H1 (cell line): ENCODE measurements at regions of chr2 and their contacts with region 1.

Region 1: GRCh38 chr2:157302492-157303099 is 23.0 kb downstream of the ERMN start:
- DNase-seq: no peak
- H3K4me3 ChIP-seq: no peak overlapping the region
- H3K27ac ChIP-seq: no peak overlapping the region
- H3K4me1 ChIP-seq: peaks cover 0 to 2% (median 0%) of the 10 kb centered on the region in 4 experiments; a peak in 1 of 7 replicates
- H3K27me3 ChIP-seq: no peaks in the 10 kb centered on the region
- CTCF ChIP-seq: peak in 2 of 3 experiments; percentile 53 to 72; a peak in 3 of 4 replicates
- EP300 ChIP-seq: no peak
- POLR2A ChIP-seq: no peak
- RAD21 ChIP-seq: peak; percentile 86 to 90

Region 2: DNA sequence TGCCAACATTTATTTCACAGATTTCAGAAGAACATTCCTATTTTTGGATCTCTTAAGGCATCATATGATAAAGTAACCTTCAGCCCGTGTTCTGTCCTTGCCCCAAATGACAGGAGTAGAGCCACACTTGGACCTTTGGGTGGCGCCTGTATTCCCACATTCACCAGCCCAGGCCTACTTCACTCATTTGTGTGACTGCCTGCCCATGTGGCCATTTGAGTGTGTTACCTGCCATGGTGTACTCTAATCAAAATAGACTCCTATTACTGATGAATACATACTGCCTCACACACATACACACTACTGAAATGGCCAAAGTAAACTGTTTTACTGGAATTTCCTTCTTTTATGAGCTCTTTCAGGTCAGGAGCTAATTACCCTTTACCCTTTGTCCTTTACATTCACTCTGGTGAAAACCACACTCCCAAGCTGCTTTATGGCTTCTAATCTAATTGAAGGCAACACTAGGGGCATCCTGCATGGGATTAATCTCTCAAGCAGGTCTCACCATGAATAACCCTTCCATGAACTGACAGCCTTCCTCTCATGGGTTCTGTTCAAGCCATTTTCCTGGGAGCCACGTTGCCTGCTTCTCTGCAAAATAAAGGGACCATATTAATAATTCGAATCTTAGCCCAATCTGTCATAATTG is 316.1 kb before region 1 on chr2:
- CTCF ChIA-PET with region 1: no interaction called
- POLR2A ChIA-PET with region 1: no interaction called
- DNase-seq: no peak
- H3K4me3 ChIP-seq: no peak overlapping the region
- H3K27ac ChIP-seq: no peak overlapping the region
- H3K4me1 ChIP-seq: no peaks in the 10 kb centered on the region; a peak in 1 of 7 replicates
- H3K27me3 ChIP-seq: no peaks in the 10 kb centered on the region
- CTCF ChIP-seq: peak; percentile 18 to 65 (median 48)
- EP300 ChIP-seq: no peak
- POLR2A ChIP-seq: no peak
- RAD21 ChIP-seq: peak; percentile 54 to 60; a peak in 3 of 4 replicates

Region 3: GRCh38 chr2:157221394-157221988 is 81.1 kb before region 1 on chr2:
- CTCF ChIA-PET with region 1: no interaction called
- POLR2A ChIA-PET with region 1: no interaction called
- DNase-seq: no peak
- H3K4me3 ChIP-seq: no peak overlapping the region
- H3K27ac ChIP-seq: no peak overlapping the region
- H3K4me1 ChIP-seq: no peaks in the 10 kb centered on the region
- H3K27me3 ChIP-seq: no peaks in the 10 kb centered on the region
- CTCF ChIP-seq: no peak
- EP300 ChIP-seq: no peak
- POLR2A ChIP-seq: no peak
- RAD21 ChIP-seq: no peak

Region 4: DNA sequence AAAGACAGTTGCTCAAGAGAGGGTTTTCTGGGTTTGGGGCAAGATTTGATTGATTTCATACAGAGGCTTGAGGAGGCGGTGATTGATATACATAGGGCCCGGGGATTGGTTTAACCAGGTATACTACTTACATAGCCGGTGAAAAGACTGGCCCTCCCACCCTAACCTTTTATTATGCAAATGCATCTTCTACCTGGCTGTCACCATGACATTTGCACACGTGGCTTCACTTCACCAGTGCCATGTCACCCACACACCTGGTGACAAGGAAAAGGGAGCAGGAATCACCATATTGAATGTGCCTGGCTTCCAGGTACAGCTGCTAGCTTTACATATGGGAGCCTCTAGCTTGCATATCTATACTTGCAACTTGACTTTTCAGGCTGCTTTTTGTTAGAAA is 13.3 kb after region 1 on chr2:
- CTCF ChIA-PET with region 1: interaction called, 24 read pairs
- POLR2A ChIA-PET with region 1: no interaction called
- DNase-seq: no peak
- H3K4me3 ChIP-seq: no peak overlapping the region
- H3K27ac ChIP-seq: no peak overlapping the region
- H3K4me1 ChIP-seq: peaks cover 0 to 3% (median 1%) of the 10 kb centered on the region in 4 experiments; a peak in 2 of 7 replicates
- H3K27me3 ChIP-seq: no peaks in the 10 kb centered on the region
- CTCF ChIP-seq: no peak
- EP300 ChIP-seq: no peak
- POLR2A ChIP-seq: no peak
- RAD21 ChIP-seq: no peak

Region 5: GRCh38 chr2:157327621-157328500 is 25.3 kb after region 1 on chr2:
- CTCF ChIA-PET with region 1: interaction called, 299 read pairs
- POLR2A ChIA-PET with region 1: no interaction called
- DNase-seq: peak; percentile 80 to 92
- H3K4me3 ChIP-seq: no peak overlapping the region
- H3K27ac ChIP-seq: no peak overlapping the region
- H3K4me1 ChIP-seq: peaks cover 0 to 9% (median 8%) of the 10 kb centered on the region in 4 experiments; a peak in 5 of 7 replicates
- H3K27me3 ChIP-seq: no peaks in the 10 kb centered on the region
- CTCF ChIP-seq: peak; percentile 93 to 97 (median 94)
- EP300 ChIP-seq: no peak
- POLR2A ChIP-seq: no peak
- RAD21 ChIP-seq: peak; percentile 81 to 87

Region 6: GRCh38 chr2:157427003-157427921 is 124.7 kb after region 1 on chr2:
- CTCF ChIA-PET with region 1: no interaction called
- POLR2A ChIA-PET with region 1: no interaction called
- DNase-seq: no peak
- H3K4me3 ChIP-seq: no peak overlapping the region
- H3K27ac ChIP-seq: no peak overlapping the region
- H3K4me1 ChIP-seq: no peaks in the 10 kb centered on the region
- H3K27me3 ChIP-seq: no peaks in the 10 kb centered on the region
- CTCF ChIP-seq: no peak
- EP300 ChIP-seq: no peak
- POLR2A ChIP-seq: no peak
- RAD21 ChIP-seq: no peak

Region 7: DNA sequence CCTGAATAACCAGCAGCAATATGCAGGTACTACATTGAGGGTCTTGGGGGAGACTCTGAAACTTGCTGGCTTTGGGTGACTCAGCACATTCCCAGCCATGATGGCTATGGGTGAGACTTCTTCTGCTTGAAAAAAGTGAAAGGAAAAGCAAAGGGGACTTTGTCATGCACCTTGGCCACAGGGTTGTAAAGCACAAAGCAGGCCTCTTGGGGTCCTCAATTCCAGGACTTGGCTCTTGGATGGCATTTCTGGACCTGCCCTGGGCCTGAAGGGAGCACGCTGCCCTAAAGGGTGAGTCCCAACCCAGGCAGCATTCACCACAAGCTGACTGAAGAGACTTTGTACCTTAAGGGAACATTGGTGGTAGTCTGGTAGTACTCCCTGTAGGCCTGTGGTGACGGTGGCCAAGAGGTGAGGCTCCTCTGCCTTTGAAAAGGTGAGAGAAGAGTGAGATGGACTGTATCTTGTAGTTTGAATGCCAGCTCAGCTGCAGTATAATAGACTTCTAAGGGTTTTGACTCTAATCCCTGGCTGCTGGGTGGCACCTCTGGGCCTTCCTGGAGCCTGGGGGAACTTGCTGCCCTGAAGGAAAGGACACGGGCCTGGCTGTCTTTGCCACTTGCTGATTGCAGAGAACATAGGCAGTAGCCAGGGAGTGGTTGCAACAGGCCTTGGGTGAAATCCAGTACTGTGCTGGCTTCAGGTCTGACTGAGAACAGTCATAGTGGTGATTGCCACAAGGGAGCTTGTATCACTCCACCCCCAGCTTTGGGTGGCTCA is 177.8 kb after region 1 on chr2:
- CTCF ChIA-PET with region 1: interaction called, 20 read pairs
- POLR2A ChIA-PET with region 1: no interaction called
- DNase-seq: no peak
- H3K4me3 ChIP-seq: no peak overlapping the region
- H3K27ac ChIP-seq: no peak overlapping the region
- H3K4me1 ChIP-seq: no peaks in the 10 kb centered on the region; a peak in 1 of 7 replicates
- H3K27me3 ChIP-seq: no peaks in the 10 kb centered on the region
- CTCF ChIP-seq: no peak
- EP300 ChIP-seq: no peak
- POLR2A ChIP-seq: no peak
- RAD21 ChIP-seq: no peak

Region 8: DNA sequence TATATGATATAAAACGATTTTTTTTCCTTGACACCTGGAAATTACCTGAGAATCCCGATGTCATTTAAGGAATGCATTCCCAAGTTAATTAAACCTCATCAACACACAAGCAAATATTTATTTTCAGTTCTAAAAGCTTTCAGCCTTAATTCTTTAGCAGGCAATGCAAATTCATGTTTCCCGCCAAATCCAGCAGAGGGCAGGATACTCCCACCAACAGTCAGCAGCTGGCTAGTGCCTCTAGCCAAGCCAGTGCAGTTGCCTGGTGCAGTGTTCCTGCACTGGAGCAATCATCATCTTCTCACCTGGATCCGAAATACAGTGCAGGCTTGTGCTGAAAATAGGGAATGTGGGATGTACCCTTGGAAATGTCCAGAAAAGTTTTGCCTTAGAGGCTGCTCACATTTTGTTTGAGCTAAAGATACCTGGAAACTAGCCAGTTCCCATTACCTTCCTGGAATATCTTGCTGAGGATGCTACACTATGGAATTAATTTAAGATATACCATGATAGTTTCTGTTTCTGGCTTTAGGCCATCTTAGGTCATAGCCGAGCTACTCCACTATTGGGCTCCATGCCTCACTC is 189.7 kb after region 1 on chr2:
- CTCF ChIA-PET with region 1: interaction called, 11 read pairs
- POLR2A ChIA-PET with region 1: no interaction called
- DNase-seq: peak; percentile 23 to 71
- H3K4me3 ChIP-seq: no peak overlapping the region
- H3K27ac ChIP-seq: no peak overlapping the region
- H3K4me1 ChIP-seq: no peaks in the 10 kb centered on the region
- H3K27me3 ChIP-seq: no peaks in the 10 kb centered on the region
- CTCF ChIP-seq: peak; percentile 71 to 90 (median 86)
- EP300 ChIP-seq: no peak
- POLR2A ChIP-seq: no peak
- RAD21 ChIP-seq: peak; percentile 96 to 98